ENCODE measurements at regions of chr3 and their contacts with region 1.

Region 1: DNA sequence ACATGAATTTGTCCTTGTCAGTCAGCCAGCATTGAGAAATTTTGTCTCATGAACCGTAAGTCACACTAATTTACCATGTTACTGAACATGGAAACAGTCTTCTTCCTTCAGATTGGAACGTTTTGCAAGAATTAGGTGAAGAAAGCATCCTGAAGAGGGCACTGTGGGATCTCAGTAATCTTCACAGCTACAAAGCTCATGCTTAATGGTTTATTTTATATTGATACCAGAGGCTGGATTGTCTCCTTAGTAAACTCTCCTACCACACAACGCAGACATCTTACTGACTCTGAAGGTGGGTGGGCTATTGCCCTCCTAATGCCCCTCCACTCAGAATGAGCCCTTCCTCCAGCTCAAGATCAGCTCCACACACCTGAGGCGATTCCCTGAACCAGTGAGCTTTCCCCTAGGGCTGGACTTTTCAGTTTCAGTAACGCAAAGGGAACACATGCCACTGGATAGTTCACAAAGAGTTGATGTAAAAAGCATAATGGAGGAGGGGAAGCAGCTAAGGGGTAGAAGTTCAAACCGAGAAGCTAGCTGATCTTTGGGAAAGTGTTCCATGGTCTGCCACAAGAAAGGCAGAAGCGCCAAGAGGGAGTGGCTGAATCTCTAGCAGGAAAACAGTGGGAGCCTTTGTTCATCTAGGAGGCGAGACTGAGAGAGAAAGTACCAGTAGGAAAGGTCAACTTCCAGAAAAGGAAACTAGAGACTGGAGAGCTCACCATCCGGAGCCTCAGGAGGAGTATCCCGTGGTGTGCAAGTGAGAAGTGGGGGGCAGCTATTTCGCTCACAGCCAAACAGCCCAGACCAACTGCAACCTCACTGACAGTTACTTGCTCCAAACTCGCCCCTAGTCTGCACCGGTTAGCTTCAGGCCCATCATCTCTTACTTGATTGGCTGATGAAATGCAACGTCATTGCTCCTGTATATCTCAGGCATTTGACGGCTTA is at the start of gene SLC9C1:
- DNase-seq: peak in 1 of 2 experiments; percentile 75
- H3K4me3 ChIP-seq: peak within 1 kb of the TSS in 1 of 4 experiments; percentile 2; a peak in 2 of 8 replicates
- H3K27ac ChIP-seq: 0 out of 2 replicates have a peak within 1 kb of the TSS, but pooled peaks have one; percentile 2
- H3K4me1 ChIP-seq: peaks cover 0 to 6% (median 4%) of the 10 kb centered on the region in 4 experiments; a peak in 5 of 7 replicates
- H3K27me3 ChIP-seq: no peaks in the 10 kb centered on the region
- CTCF ChIP-seq: peak in 2 of 3 experiments; percentile 56 to 80; a peak in 2 of 4 replicates
- EP300 ChIP-seq: no peak
- POLR2A ChIP-seq: no peak
- RAD21 ChIP-seq: peak; percentile 84 to 87
- total RNA-seq, gene SLC9C1: 0.24 and 1.1 TPM in 2 replicates

Region 2: DNA sequence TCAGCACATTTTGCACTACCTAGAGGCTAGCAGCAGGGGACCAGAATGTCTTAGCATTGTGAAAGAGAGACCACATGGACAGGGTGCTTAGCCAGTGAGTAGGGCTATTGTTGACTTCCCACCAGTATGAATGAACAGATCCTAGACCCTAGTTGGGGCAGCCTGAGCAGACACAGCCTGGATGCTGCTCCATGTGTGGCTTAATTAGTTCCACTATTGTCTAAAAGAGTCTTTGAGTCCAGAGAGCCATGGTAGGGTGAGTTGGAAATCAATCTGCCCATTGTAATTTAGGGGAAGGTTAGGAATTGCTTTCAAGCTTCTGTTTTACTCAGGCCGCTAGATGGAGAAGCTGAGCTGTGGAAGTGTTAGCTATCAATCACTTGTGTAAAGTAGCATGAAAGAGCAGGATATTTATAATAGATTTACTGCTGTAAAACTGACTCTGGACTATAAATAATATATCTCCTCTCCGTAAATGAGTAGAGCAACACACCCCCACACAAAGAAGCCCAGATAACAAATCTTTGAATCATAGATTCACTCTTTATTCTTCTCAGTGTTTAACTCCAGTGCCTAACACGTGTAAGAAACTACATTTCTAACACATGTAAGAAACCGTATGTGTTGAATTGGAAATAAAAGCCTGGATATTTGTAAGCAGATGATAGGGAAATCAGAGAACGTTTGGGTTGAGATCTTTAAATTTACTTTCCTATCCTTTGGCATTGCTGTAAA is 156.5 kb before region 1 on chr3:
- CTCF ChIA-PET with region 1: interaction called, 18 read pairs
- POLR2A ChIA-PET with region 1: no interaction called
- DNase-seq: peak; percentile 27 to 72
- H3K4me3 ChIP-seq: no peak overlapping the region; a peak in 1 of 8 replicates
- H3K27ac ChIP-seq: peak overlapping the region; percentile 49; the same call in 1 of the 2 replicates
- H3K4me1 ChIP-seq: peaks cover 1 to 8% (median 3%) of the 10 kb centered on the region in 4 experiments; a peak in 4 of 7 replicates
- H3K27me3 ChIP-seq: no peaks in the 10 kb centered on the region
- CTCF ChIP-seq: peak in 2 of 3 experiments; percentile 60 to 74; a peak in 3 of 4 replicates
- EP300 ChIP-seq: no peak
- POLR2A ChIP-seq: 0 out of 3 replicates have a peak, but pooled peaks of 1 of the 2 experiments have one; percentile 18
- RAD21 ChIP-seq: peak; percentile 84 to 87

Region 3: GRCh38 chr3:112303764-112304325 is 10.2 kb after region 1 on chr3:
- CTCF ChIA-PET with region 1: interaction called, 47 read pairs
- POLR2A ChIA-PET with region 1: interaction called, 32 read pairs
- DNase-seq: peak in 1 of 2 experiments; percentile 51
- H3K4me3 ChIP-seq: peak overlapping the region; percentile 29 to 53 (median 37)
- H3K27ac ChIP-seq: peak overlapping the region; percentile 80
- H3K4me1 ChIP-seq: peaks cover 20 to 27% (median 22%) of the 10 kb centered on the region in 4 experiments
- H3K27me3 ChIP-seq: no peaks in the 10 kb centered on the region
- CTCF ChIP-seq: no peak
- EP300 ChIP-seq: no peak
- POLR2A ChIP-seq: no peak
- RAD21 ChIP-seq: no peak

Region 4: DNA sequence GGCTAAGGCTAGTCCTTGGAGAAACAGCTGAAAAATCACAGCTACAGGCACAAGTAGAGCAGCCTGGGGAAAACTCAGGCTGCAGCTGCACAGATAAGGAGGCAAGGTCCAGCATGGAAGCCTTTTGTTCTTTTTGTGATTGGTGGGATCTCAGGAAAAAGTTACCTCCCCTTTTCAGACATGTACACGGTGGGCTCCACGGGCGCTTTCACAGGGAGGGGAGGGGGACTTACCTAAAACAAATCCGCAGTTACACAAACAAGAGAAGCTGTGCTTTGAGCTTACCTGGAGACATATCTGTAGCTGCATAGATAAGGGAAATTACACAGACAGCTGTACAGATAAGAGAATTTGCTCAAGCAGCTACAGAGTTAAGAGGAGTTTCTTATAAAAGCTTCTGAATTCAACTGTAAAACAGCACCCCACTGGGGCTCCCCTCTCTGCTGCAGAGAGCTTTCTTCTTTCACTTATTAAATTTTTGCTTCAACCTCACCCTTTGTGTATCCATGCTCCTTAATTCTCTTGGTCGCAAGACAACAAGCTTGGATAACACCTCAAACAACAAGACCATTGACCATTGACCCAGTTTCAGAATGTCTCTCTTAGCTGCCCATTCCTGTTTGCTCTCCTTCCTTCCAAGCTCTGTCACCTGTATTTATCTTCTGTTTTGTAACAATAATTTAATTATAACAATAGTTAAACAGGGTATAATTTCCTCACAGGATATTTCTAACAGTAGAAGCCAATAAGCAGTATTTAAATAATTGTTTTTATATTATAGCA is 28.4 kb after region 1 on chr3:
- CTCF ChIA-PET with region 1: interaction called, 30 read pairs
- POLR2A ChIA-PET with region 1: interaction called, 3 read pairs
- DNase-seq: no peak
- H3K4me3 ChIP-seq: peak overlapping the region in 1 of 4 experiments; percentile 28; a peak in 1 of 8 replicates
- H3K27ac ChIP-seq: peak overlapping the region; percentile 25; the same call in 1 of the 2 replicates
- H3K4me1 ChIP-seq: peaks cover 0 to 16% (median 8%) of the 10 kb centered on the region in 4 experiments; a peak in 5 of 7 replicates
- H3K27me3 ChIP-seq: no peaks in the 10 kb centered on the region
- CTCF ChIP-seq: no peak
- EP300 ChIP-seq: no peak
- POLR2A ChIP-seq: no peak
- RAD21 ChIP-seq: no peak

Region 5: DNA sequence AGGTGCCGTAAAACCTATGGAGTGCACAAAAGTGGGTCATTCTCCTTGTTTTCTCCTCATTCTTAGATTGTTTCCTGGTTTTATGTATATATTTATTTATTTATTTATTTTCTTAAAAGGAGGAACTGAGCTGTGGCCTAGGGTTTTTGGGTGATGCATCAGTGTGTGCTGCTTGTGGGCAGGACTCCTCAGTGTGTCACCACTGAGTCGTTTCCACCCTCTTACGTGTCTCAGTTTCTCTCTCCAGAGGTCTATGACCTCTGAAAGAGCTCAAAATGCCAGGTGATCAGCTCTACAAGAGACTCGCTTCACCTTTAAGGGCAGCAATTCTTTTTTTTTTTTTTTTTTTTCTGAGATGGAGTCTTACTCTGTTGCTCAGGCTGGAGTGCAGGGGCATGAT is 112.2 kb after region 1 on chr3:
- CTCF ChIA-PET with region 1: interaction called, 10 read pairs
- POLR2A ChIA-PET with region 1: interaction called, 6 read pairs
- DNase-seq: no peak
- H3K4me3 ChIP-seq: no peak overlapping the region
- H3K27ac ChIP-seq: no peak overlapping the region
- H3K4me1 ChIP-seq: peaks cover under 1 to 18% (median 9%) of the 10 kb centered on the region in 4 experiments; a peak in 6 of 7 replicates
- H3K27me3 ChIP-seq: no peaks in the 10 kb centered on the region
- CTCF ChIP-seq: no peak
- EP300 ChIP-seq: no peak
- POLR2A ChIP-seq: no peak
- RAD21 ChIP-seq: no peak

Region 6: DNA sequence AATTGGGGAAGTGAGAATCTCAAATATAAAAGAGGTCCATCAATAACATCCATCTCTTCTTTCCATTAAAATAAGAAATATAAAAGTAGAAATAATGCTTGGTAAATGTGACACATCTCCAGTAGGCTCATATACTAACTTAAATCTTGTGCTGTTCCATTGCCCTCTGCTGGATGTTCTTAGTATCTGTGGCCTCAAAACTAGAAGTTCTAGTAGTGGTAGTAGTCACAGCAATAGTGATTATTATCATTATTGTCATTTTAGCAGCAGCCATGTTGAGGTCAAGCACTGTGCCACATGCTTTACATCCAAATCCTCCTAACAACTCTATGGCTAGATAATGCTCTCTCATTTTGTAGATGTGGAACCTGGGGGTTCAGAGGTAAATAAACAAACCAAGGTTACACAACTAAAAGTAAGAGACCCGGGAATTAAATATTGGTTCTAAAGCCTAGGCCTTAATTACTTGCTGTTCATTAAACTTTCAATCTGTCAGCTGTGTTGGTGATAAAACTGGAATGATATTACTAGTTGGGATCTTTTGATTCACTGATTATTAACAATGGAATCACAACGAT is 225.9 kb after region 1 on chr3:
- CTCF ChIA-PET with region 1: interaction called, 33 read pairs
- POLR2A ChIA-PET with region 1: interaction called, 3 read pairs
- DNase-seq: no peak
- H3K4me3 ChIP-seq: no peak overlapping the region
- H3K27ac ChIP-seq: no peak overlapping the region
- H3K4me1 ChIP-seq: no peaks in the 10 kb centered on the region
- H3K27me3 ChIP-seq: no peaks in the 10 kb centered on the region
- CTCF ChIP-seq: peak in 2 of 3 experiments; percentile 63 to 70; a peak in 2 of 4 replicates
- EP300 ChIP-seq: no peak
- POLR2A ChIP-seq: no peak
- RAD21 ChIP-seq: peak; percentile 88 to 89

Measured in H1 (cell line).